ENCODE measurements at regions of chr6 and their contacts with region 1.

Region 1: DNA sequence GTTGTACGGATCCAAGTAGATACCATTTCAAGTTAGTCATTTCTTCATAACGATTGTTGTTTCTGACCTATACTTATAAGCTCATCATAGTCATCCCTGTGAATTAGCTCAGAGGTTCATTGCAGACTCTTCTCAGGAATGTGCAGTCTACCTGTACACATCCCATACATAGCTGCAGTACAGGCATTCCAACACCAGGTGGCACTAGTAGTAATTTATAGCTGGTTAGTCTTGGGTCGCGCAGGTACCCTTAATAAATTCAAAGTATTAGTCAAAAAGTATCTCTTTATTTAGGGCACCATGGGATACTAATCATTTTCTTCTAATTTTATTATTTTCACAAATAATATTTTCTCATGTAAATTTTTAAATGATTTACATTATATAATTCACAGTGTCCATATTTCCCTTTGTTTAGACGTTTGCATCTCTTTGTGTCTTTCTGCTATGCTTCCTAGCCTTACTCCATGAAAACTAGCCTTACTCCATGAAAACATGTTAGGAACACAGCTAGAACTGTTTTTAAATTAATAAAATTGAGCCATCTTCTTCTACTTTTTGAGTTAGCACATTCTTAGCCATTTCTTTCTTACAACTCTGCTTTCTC is 128.6 kb upstream of the FAM83B start:
- DNase-seq: no peak
- H3K4me3 ChIP-seq: no peak overlapping the region
- H3K27ac ChIP-seq: no peak overlapping the region
- H3K27me3 ChIP-seq: no peaks in the 10 kb centered on the region
- CTCF ChIP-seq: peak; percentile 91

Region 2: GRCh38 chr6:53986165-53986720 is 731.7 kb before region 1 on chr6:
- CTCF ChIA-PET with region 1: interaction called, 17 read pairs
- POLR2A ChIA-PET with region 1: no interaction called
- DNase-seq: peak; percentile 39
- H3K4me3 ChIP-seq: no peak overlapping the region
- H3K27ac ChIP-seq: no peak overlapping the region
- H3K27me3 ChIP-seq: no peaks in the 10 kb centered on the region
- CTCF ChIP-seq: peak; percentile 88

Region 3: GRCh38 chr6:54697424-54697823 is 20.5 kb before region 1 on chr6:
- CTCF ChIA-PET with region 1: interaction called, 27 read pairs
- POLR2A ChIA-PET with region 1: no interaction called
- DNase-seq: peak; percentile 6
- H3K4me3 ChIP-seq: no peak overlapping the region
- H3K27ac ChIP-seq: no peak overlapping the region
- H3K27me3 ChIP-seq: no peaks in the 10 kb centered on the region
- CTCF ChIP-seq: peak; percentile 59

Region 4: GRCh38 chr6:54730767-54731630 is 13.0 kb after region 1 on chr6:
- CTCF ChIA-PET with region 1: interaction called, 20 read pairs
- POLR2A ChIA-PET with region 1: no interaction called
- DNase-seq: no peak
- H3K4me3 ChIP-seq: no peak overlapping the region
- H3K27ac ChIP-seq: no peak overlapping the region
- H3K27me3 ChIP-seq: no peaks in the 10 kb centered on the region
- CTCF ChIP-seq: no peak

Region 5: GRCh38 chr6:54747955-54748354 is 30.0 kb after region 1 on chr6:
- CTCF ChIA-PET with region 1: interaction called, 16 read pairs
- POLR2A ChIA-PET with region 1: no interaction called
- DNase-seq: no peak
- H3K4me3 ChIP-seq: no peak overlapping the region
- H3K27ac ChIP-seq: no peak overlapping the region
- H3K27me3 ChIP-seq: no peaks in the 10 kb centered on the region
- CTCF ChIP-seq: no peak

Region 6: DNA sequence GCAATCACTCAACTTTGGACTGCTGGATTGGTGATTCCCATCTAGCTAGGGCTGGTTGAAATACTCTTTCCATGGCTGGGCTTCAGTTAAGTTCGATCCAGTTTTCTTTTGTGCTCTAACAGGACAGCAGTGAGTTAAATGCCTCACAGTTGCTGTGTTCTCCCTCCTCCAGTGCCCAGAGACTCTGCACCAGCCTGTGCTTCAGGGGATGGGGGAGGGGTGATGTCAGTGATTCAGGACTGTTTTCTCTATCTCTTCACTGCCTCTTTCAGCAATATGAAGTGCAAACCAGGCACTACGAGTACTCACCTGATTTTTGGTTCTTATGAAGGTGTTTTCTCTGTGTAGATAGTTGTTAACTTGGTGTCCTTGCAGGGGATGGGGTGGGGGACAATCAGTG is 40.4 kb after region 1 on chr6:
- CTCF ChIA-PET with region 1: no interaction called
- POLR2A ChIA-PET with region 1: no interaction called
- DNase-seq: no peak
- H3K4me3 ChIP-seq: no peak overlapping the region
- H3K27ac ChIP-seq: no peak overlapping the region
- H3K27me3 ChIP-seq: no peaks in the 10 kb centered on the region
- CTCF ChIP-seq: no peak

Region 7: GRCh38 chr6:54860739-54861138 is 142.8 kb after region 1 on chr6:
- CTCF ChIA-PET with region 1: no interaction called
- POLR2A ChIA-PET with region 1: no interaction called
- DNase-seq: no peak
- H3K4me3 ChIP-seq: no peak overlapping the region
- H3K27ac ChIP-seq: no peak overlapping the region
- H3K27me3 ChIP-seq: no peaks in the 10 kb centered on the region
- CTCF ChIP-seq: no peak

Region 8: DNA sequence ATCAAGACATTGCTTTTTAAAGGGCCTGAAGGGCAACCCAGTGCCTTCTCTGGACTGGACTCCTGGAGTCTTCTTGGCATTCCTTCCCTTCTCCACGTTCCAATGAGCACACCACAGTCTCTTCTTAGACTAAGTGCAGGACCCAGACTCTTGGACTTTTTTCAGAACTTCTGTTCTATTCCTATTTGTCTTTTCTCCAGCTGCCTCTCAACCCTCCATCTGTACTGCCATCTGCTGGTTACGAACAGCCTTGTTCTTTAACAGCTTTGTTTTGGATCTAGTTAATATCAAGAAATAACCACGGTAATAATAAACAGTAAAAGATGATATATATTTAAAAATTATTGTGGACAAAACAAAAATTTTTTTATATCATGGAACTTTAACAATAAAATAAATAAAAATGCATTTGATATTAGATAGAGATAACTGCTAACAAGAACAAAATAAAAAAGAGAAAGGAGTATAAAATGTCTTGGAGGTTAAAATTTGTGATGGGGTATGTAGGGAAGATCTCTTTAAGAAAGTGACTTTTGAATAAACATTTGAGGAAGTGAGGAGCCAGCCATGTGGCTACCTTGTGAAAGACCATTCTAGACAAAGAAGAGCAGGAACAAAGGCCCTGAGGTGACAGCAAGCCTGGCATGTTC is 351.3 kb after region 1 on chr6:
- CTCF ChIA-PET with region 1: interaction called, 31 read pairs
- POLR2A ChIA-PET with region 1: no interaction called
- DNase-seq: peak; percentile 23
- H3K4me3 ChIP-seq: no peak overlapping the region
- H3K27ac ChIP-seq: no peak overlapping the region
- H3K27me3 ChIP-seq: no peaks in the 10 kb centered on the region
- CTCF ChIP-seq: peak; percentile 83